ENCODE measurements at regions of chr17 and their contacts with region 1.

Region 1: GRCh38 chr17:64145757-64146417 is 15.9 kb upstream of the ERN1 start:
- DNase-seq: peak; percentile 88 to 99 (median 95)
- ATAC-seq: peak; percentile 88
- H3K4me3 ChIP-seq: peak overlapping the region; percentile 74 to 95
- H3K4me3 Mint-ChIP-seq: no peak overlapping the region
- H3K27ac ChIP-seq: peak overlapping the region; percentile 89 to 91
- H3K27ac Mint-ChIP-seq: no peak overlapping the region
- H3K4me1 ChIP-seq: peaks cover 16% of the 10 kb centered on the region
- H3K4me1 Mint-ChIP-seq: peaks cover 27% of the 10 kb centered on the region
- H3K27me3 ChIP-seq: no peaks in the 10 kb centered on the region
- H3K27me3 Mint-ChIP-seq: no peaks in the 10 kb centered on the region
- CTCF ChIP-seq: no peak

Region 2: DNA sequence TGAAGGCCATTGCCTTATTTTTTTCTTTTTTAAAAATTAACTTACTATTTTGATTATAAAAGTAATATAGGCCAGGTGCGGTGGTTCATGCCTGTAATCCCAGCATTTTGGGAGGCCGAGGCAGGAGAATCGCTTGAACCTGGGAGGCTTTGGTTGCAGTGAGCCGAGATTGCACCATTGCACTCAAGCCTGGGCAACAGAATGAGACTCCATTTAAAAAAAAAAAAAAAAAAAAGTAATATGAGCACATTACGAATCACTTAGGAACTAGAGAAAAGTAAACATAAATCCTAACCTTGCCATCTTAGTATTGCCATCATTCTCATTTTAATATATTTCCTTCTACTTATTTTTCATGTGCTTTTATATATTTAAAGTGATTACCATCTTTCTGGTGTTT is 558.1 kb before region 1 on chr17:
- CTCF ChIA-PET with region 1: no interaction called
- POLR2A ChIA-PET with region 1: no interaction called
- intact Hi-C with region 1: no loop called
- DNase-seq: no peak
- ATAC-seq: no peak
- H3K4me3 ChIP-seq: no peak overlapping the region
- H3K4me3 Mint-ChIP-seq: no peak overlapping the region
- H3K27ac ChIP-seq: no peak overlapping the region
- H3K27ac Mint-ChIP-seq: no peak overlapping the region
- H3K4me1 ChIP-seq: peaks cover 10% of the 10 kb centered on the region
- H3K4me1 Mint-ChIP-seq: peaks cover 16% of the 10 kb centered on the region
- H3K27me3 ChIP-seq: no peaks in the 10 kb centered on the region
- H3K27me3 Mint-ChIP-seq: no peaks in the 10 kb centered on the region
- CTCF ChIP-seq: no peak

Region 3: DNA sequence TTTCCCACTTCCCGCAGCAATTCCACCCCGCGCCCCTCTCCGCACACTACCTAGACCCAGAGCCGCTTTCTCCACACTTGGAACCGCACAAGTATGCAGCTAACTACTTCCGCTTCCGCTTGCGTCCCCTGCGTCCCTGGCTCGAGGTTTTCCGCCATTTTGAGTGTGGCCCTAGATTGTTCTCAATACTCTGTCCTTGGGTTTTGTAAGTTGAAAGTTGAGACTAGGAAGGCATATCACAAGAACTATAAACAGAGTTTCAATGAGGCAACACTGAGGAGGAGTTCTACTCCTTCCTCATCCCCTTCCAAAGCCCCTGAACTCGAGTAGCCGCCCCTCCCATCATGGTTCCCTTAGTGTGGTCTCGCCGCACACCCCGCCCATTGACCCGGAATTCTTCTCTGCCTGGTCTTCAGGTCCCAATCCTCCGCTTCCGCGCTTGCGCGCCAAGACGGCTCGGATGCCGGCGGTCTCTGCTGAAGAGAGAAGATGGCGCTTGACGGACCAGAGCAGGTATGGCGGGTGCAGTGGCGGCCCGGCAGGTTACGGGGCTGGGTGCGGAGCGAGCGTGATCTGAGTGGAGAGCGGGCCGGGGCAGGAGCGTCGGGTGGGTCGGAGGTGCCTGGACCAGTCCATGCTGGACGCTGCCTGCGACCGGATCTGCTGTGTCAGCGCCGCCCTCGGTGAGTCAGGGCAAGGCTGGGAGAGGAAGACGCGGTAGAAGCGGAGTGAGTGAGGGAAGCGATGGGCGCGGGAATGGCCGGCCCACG is 318.7 kb before region 1 on chr17 and contains the starts of genes FTSJ3 and PSMC5:
- CTCF ChIA-PET with region 1: no interaction called
- POLR2A ChIA-PET with region 1: interaction called, 5 read pairs
- intact Hi-C with region 1: loop called in 1 of 2 experiments (anchors 1 kb)
- DNase-seq: peak; percentile 91 to 99 (median 95)
- ATAC-seq: peak; percentile 92
- H3K4me3 ChIP-seq: peak within 1 kb of the TSS; percentile 74 to 75
- H3K4me3 Mint-ChIP-seq: peak within 1 kb of the TSS; percentile 100
- H3K27ac ChIP-seq: peak within 1 kb of the TSS; percentile 66 to 96
- H3K27ac Mint-ChIP-seq: peak within 1 kb of the TSS; percentile 98
- H3K4me1 ChIP-seq: peaks cover 56% of the 10 kb centered on the region
- H3K4me1 Mint-ChIP-seq: peaks cover 81% of the 10 kb centered on the region
- H3K27me3 ChIP-seq: no peaks in the 10 kb centered on the region
- H3K27me3 Mint-ChIP-seq: no peaks in the 10 kb centered on the region
- CTCF ChIP-seq: peak; percentile 51
- total RNA-seq, gene FTSJ3: 60.0 to 70.3 TPM
- total RNA-seq, gene PSMC5: 88.5 to 90.3 TPM

Region 4: GRCh38 chr17:63848834-63849700 is 296.8 kb before region 1 on chr17:
- CTCF ChIA-PET with region 1: no interaction called
- POLR2A ChIA-PET with region 1: interaction called, 7 read pairs
- intact Hi-C with region 1: loop called in 1 of 2 experiments (anchors 2 kb)
- DNase-seq: peak; percentile 88 to 97 (median 95)
- ATAC-seq: peak; percentile 98
- H3K4me3 ChIP-seq: peak overlapping the region; percentile 34 to 55
- H3K4me3 Mint-ChIP-seq: peak overlapping the region; percentile 81
- H3K27ac ChIP-seq: peak overlapping the region; percentile 23 to 81
- H3K27ac Mint-ChIP-seq: peak overlapping the region; percentile 90
- H3K4me1 ChIP-seq: peaks cover 12% of the 10 kb centered on the region
- H3K4me1 Mint-ChIP-seq: peaks cover 17% of the 10 kb centered on the region
- H3K27me3 ChIP-seq: no peaks in the 10 kb centered on the region
- H3K27me3 Mint-ChIP-seq: no peaks in the 10 kb centered on the region
- CTCF ChIP-seq: peak; percentile 73

Region 5: GRCh38 chr17:64051153-64051552 is 94.7 kb before region 1 on chr17:
- CTCF ChIA-PET with region 1: no interaction called
- POLR2A ChIA-PET with region 1: interaction called, 28 read pairs
- intact Hi-C with region 1: no loop called
- DNase-seq: peak in 3 of 9 experiments; percentile 10 to 78 (median 67)
- ATAC-seq: peak; percentile 99
- H3K4me3 ChIP-seq: no peak overlapping the region
- H3K4me3 Mint-ChIP-seq: no peak overlapping the region
- H3K27ac ChIP-seq: peak overlapping the region; percentile 6 to 70
- H3K27ac Mint-ChIP-seq: peak overlapping the region; percentile 88
- H3K4me1 ChIP-seq: peaks cover 26% of the 10 kb centered on the region
- H3K4me1 Mint-ChIP-seq: peaks cover 35% of the 10 kb centered on the region
- H3K27me3 ChIP-seq: no peaks in the 10 kb centered on the region
- H3K27me3 Mint-ChIP-seq: no peaks in the 10 kb centered on the region
- CTCF ChIP-seq: no peak

Region 6: DNA sequence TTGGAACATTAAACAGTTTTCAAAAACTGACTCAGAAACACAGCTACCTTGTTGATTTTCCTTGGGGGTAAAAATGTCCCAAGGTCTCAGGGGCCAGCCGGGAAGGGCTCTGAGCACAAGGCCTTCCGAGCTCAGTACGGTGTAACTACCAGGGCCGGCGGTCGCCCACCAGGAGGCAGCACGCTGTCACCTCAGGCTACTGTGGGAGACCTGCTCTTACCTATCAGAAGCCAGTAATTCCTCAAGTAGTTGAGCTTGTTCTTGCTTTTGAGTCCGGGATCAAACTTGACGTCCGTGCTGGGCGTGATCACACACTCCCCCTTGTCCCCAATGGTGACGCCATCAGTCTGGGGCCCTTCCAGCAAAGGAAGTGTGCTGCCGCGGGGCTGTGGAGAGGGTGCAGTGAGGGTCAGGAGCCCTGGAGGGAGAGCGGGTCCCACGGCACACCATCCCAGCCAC is 82.1 kb before region 1 on chr17:
- CTCF ChIA-PET with region 1: interaction called, 6 read pairs
- POLR2A ChIA-PET with region 1: interaction called, 28 read pairs
- intact Hi-C with region 1: no loop called
- DNase-seq: peak; percentile 20 to 73 (median 56)
- ATAC-seq: peak; percentile 54
- H3K4me3 ChIP-seq: no peak overlapping the region
- H3K4me3 Mint-ChIP-seq: peak overlapping the region; percentile 76
- H3K27ac ChIP-seq: peak overlapping the region in 1 of 2 experiments; percentile 58
- H3K27ac Mint-ChIP-seq: peak overlapping the region; percentile 86
- H3K4me1 ChIP-seq: peaks cover 32% of the 10 kb centered on the region
- H3K4me1 Mint-ChIP-seq: peaks cover 75% of the 10 kb centered on the region
- H3K27me3 ChIP-seq: no peaks in the 10 kb centered on the region
- H3K27me3 Mint-ChIP-seq: no peaks in the 10 kb centered on the region
- CTCF ChIP-seq: peak; percentile 33

Region 7: DNA sequence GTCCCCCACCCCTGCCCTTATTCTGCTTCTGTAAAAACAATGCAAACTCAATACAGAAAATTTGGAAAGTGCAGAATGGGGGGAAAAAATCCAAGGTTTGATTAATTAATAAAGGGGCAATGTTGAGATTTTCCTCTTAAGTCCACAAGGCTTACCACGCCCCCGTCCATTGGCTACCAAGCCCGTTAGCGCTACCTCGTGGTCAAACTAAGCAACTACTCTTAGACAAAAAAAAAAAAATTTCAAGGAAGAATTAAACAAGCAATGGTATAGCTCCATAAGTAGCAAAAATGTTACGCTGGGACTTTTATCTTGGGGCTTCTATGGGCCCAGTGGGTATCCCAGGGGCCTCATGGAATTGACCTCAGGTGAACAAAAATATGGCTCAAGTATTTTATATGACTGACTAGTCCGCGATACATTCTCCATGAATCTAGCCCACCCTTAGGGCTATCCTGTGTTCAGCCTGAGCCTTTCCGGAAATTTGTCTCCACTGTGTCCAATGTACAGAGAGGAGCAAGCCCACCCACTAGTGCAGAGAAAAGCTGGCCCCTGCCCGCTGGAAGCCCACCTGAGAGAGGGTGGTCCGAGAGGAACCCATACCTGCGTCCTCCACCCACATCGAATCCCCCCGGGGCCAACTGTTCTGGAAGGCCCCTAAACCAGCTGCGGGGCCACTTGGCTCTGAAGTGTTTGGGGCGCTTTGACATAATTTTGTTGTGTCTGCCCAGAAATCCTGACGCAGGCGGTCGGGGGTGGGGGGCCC is 136.3 kb after region 1 on chr17:
- CTCF ChIA-PET with region 1: interaction called, 3 read pairs
- POLR2A ChIA-PET with region 1: interaction called, 5 read pairs
- intact Hi-C with region 1: loop called (anchors 1 to 5 kb)
- DNase-seq: peak in 8 of 9 experiments; percentile 25 to 79 (median 51)
- ATAC-seq: peak; percentile 77
- H3K4me3 ChIP-seq: no peak overlapping the region
- H3K4me3 Mint-ChIP-seq: no peak overlapping the region
- H3K27ac ChIP-seq: no peak overlapping the region
- H3K27ac Mint-ChIP-seq: no peak overlapping the region
- H3K4me1 ChIP-seq: no peaks in the 10 kb centered on the region
- H3K4me1 Mint-ChIP-seq: no peaks in the 10 kb centered on the region
- H3K27me3 ChIP-seq: no peaks in the 10 kb centered on the region
- H3K27me3 Mint-ChIP-seq: peaks cover 3% of the 10 kb centered on the region
- CTCF ChIP-seq: peak; percentile 67

Region 8: GRCh38 chr17:64339516-64340490 is 193.9 kb after region 1 on chr17:
- CTCF ChIA-PET with region 1: no interaction called
- POLR2A ChIA-PET with region 1: no interaction called
- intact Hi-C with region 1: no loop called
- DNase-seq: no peak
- ATAC-seq: no peak
- H3K4me3 ChIP-seq: no peak overlapping the region
- H3K4me3 Mint-ChIP-seq: no peak overlapping the region
- H3K27ac ChIP-seq: no peak overlapping the region
- H3K27ac Mint-ChIP-seq: peak overlapping the region; percentile 49
- H3K4me1 ChIP-seq: peaks cover 7% of the 10 kb centered on the region
- H3K4me1 Mint-ChIP-seq: peaks cover 23% of the 10 kb centered on the region
- H3K27me3 ChIP-seq: no peaks in the 10 kb centered on the region
- H3K27me3 Mint-ChIP-seq: no peaks in the 10 kb centered on the region
- CTCF ChIP-seq: no peak

Region 9: DNA sequence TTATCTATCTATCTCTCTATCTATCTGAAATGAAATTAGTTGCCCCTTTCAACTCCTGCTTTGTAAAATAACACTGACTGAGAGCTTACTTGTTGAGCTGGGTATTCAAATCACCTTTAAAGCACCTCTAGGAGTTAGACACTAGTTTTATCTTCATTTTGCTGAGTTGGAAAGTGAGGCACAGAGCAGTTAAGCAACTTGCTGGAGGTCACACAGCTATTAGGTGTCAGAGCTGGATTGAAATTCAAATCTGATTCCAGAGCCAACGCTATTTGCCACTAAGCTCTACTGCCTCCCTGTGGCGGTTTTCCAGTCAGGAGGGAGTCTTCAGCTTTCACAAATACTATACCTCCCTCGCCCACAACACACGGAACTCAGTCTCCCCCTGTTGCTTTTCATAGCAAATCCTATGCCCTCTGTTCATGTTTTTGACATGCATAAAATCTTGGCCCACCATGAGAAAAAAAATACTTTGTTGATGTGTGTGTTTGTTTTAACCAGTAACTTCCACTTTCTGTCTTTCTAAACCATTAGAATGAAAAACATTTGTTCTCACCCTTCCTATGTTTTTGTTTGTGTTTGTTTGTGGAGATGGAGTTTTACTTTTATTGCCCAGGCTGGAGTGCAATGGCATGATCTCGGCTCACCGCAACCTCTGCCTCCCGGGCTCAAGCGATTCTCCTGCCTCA is 591.1 kb after region 1 on chr17:
- CTCF ChIA-PET with region 1: no interaction called
- POLR2A ChIA-PET with region 1: no interaction called
- intact Hi-C with region 1: no loop called
- DNase-seq: peak; percentile 24 to 76 (median 55)
- ATAC-seq: peak; percentile 69
- H3K4me3 ChIP-seq: no peak overlapping the region
- H3K4me3 Mint-ChIP-seq: no peak overlapping the region
- H3K27ac ChIP-seq: no peak overlapping the region
- H3K27ac Mint-ChIP-seq: no peak overlapping the region
- H3K4me1 ChIP-seq: no peaks in the 10 kb centered on the region
- H3K4me1 Mint-ChIP-seq: peaks cover 22% of the 10 kb centered on the region
- H3K27me3 ChIP-seq: no peaks in the 10 kb centered on the region
- H3K27me3 Mint-ChIP-seq: no peaks in the 10 kb centered on the region
- CTCF ChIP-seq: peak; percentile 55